AG04450 (cell line): ENCODE measurements at regions of chr11 and their contacts with region 1.

Region 1: GRCh38 chr11:3854977-3855807 is at the start of gene STIM1:
- DNase-seq: peak; percentile 83
- H3K4me3 ChIP-seq: peak within 1 kb of the TSS; percentile 85
- H3K27ac ChIP-seq: peak within 1 kb of the TSS; percentile 73
- H3K27me3 ChIP-seq: no peaks in the 10 kb centered on the region
- CTCF ChIP-seq: peak; percentile 87
- polyA plus RNA-seq, gene STIM1: 19.7 and 23.4 TPM in 2 replicates

Region 2: GRCh38 chr11:3786781-3787428 is 68.3 kb before region 1 on chr11:
- CTCF ChIA-PET with region 1: interaction called, 16 read pairs
- POLR2A ChIA-PET with region 1: no interaction called
- DNase-seq: no peak
- H3K4me3 ChIP-seq: no peak overlapping the region
- H3K27ac ChIP-seq: no peak overlapping the region
- H3K27me3 ChIP-seq: no peaks in the 10 kb centered on the region
- CTCF ChIP-seq: no peak

Region 3: DNA sequence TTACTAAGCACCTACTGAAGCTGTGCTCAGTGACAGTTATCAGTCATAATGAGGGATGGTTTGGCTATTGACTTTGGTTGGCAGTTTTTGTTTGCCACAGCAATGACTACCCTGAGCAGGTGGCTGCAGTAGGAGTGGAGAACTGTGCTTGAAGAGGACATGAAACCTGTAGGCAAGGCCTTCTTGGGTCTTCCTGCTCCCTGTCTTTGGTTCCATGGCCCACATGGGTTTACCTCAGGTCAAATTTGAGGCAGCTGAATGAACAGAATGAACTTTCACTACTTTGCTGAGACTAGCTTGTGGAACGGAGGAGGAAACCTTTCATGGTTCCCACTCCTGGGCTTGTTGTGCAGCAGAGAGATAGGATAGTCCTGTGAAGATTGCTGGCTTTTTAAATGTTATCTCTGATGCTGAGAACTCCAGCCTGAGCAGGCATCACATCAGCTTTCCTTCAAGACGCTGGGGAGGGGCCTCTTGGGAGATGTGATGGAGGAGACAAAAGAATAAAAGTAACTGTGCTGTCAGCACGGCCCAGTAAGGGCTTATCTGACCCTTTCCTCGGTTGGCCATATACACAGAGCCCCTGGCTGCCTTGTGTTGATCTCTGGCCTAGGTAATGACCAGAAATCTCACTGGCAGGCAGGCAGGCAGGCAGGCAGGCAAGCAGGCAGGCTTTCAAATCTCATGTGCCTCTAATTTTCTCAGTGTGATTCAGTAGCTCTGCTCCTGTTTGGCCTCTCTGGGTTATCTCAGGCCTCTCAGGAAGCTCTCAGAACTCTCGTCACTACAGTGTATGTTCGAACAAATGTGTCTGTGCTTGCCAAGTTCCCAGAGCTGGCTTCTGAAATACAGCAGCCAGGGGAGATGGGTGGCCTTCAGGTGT is 12.3 kb after region 1 on chr11:
- CTCF ChIA-PET with region 1: interaction called, 38 read pairs
- POLR2A ChIA-PET with region 1: no interaction called
- DNase-seq: no peak
- H3K4me3 ChIP-seq: no peak overlapping the region
- H3K27ac ChIP-seq: no peak overlapping the region
- H3K27me3 ChIP-seq: no peaks in the 10 kb centered on the region
- CTCF ChIP-seq: no peak

Region 4: GRCh38 chr11:3894128-3894731 is 39.0 kb after region 1 on chr11:
- CTCF ChIA-PET with region 1: interaction called, 11 read pairs
- POLR2A ChIA-PET with region 1: no interaction called
- DNase-seq: no peak
- H3K4me3 ChIP-seq: no peak overlapping the region
- H3K27ac ChIP-seq: no peak overlapping the region
- H3K27me3 ChIP-seq: no peaks in the 10 kb centered on the region
- CTCF ChIP-seq: no peak

Region 5: DNA sequence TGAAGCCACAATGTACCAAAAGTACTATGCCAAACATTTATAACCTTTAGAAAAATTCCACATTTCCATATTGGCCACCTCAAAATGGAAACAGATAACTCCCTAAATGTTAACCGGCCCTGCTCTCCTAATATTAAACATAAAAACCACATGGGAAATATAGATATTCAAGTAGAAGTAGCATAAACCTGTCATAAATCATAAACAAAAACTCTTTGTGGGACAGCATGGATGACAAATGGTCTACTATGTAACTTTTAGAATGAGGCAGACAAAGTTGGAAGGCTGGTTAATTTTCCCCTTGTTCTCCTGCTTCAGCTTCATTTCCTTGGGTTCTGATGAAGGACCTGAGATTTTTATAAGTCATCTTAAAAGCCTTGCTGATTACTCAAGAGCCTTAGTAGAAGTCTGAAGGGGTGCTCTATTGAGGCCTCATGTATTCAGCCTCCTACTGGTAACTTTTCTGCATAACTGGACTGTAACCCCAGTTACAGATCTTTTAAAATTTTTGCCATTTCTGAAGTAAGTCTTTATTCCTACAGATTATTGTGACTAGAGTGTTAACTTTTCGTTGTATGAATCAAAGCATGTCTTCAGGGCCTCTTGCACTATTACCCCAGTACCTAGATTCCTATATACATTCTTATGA is 116.7 kb after region 1 on chr11:
- CTCF ChIA-PET with region 1: interaction called, 21 read pairs
- POLR2A ChIA-PET with region 1: no interaction called
- DNase-seq: no peak
- H3K4me3 ChIP-seq: no peak overlapping the region
- H3K27ac ChIP-seq: no peak overlapping the region
- H3K27me3 ChIP-seq: no peaks in the 10 kb centered on the region
- CTCF ChIP-seq: peak; percentile 33

Region 6: DNA sequence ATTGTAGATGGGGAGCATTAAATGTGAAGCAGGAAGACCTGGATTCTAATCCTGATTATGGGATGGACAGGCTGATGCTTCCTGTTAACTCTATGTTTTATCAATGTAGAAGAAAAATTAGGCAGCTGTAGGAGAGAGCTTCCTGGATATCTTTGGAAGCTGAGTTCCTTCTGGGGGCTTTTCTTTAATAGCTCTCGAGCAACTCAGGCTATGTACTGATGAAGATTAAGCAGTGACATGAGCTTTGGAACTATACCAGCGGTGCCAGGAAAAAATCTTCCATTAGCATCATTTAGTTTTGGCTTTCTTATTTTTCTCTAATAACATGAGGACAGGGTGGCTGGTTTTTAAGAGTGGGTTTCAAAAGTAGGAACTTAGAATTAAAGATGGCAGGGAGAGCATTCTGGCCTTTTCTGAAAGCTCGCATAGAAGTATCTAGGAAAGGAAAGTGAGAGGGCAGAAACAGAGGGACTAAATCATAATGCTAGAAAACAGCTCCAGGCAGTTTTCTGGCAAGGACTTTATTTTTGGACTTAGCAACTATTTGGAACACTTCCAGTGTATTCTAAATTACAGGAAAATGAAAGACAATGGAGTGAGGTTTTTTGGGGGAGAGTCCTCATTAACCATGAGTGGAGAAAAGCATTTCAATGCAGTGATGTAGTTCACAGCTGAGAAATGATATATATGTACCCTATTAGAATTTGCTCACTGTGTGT is 170.2 kb after region 1 on chr11:
- CTCF ChIA-PET with region 1: interaction called, 28 read pairs
- POLR2A ChIA-PET with region 1: no interaction called
- DNase-seq: no peak
- H3K4me3 ChIP-seq: no peak overlapping the region
- H3K27ac ChIP-seq: no peak overlapping the region
- H3K27me3 ChIP-seq: no peaks in the 10 kb centered on the region
- CTCF ChIP-seq: no peak

Region 7: DNA sequence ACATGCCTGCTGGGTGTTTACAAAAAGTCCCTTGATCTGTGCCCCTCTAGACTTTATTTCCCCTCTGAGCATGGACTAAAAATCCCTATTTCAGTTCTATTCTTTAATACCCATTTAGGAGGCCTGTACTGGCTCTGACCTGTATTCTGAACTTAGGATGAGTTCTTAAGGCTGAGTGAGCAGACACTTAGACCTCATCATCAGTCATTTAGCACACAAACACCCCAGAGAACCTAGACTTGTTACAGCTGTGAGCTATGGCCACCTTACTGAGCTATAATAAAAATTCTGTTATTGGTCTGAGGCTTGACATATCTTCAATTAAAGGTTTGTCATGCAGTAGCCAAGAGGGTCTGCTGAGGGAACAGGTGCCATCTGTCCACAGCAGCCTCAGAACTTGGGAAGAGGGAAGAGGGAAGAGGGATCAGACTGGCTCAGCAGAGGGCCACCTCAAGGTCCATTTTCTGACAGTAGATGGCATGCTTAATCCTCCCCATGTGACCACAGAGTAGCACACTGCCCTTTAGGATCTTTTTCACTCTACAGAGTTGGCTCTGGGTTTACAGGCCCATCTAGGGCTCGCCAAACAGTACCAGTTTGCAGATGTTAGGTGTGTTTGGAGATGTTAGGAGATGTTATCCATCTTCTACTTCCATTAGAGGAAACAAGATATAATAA is 209.2 kb after region 1 on chr11:
- CTCF ChIA-PET with region 1: interaction called, 1,559 read pairs
- POLR2A ChIA-PET with region 1: no interaction called
- DNase-seq: no peak
- H3K4me3 ChIP-seq: no peak overlapping the region
- H3K27ac ChIP-seq: no peak overlapping the region
- H3K27me3 ChIP-seq: no peaks in the 10 kb centered on the region
- CTCF ChIP-seq: no peak